Heart right ventricle (tissue), 16 donors: ENCODE measurements at regions of chrX and their contacts with region 1.

Region 1: GRCh38 chrX:8724300-8724699 is 7.6 kb downstream of the ANOS1 start:
- DNase-seq: no peak
- ATAC-seq: peak in 1 of 8 donors; percentile 48
- H3K4me3 ChIP-seq: no peak overlapping the region
- H3K27ac ChIP-seq: no peak overlapping the region
- H3K4me1 ChIP-seq: no peaks in the 10 kb centered on the region
- H3K27me3 ChIP-seq: peaks cover 0 to 28% (median 0%) of the 10 kb centered on the region in 7 donors
- CTCF ChIP-seq: no peak

Region 2: DNA sequence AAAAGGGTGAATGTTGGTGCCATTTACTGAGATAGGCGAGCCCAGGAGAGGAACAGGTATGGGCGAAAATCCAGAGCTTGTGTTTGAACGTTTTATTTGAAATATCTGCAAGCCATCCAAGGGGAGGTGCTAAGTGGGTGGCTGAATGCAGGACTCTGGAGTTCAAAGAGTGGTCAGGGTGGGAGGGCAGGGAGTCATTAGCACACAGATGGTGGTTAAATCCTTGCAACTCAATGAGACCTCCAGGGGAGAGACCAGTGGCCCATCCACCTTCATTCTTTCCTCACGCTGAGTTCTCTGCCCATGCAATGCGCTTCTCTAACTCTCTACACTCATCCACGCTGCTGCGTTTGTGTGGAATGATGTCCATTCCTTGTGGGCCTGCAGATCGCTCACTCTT is 158.6 kb before region 1 on chrX:
- intact Hi-C with region 1: loop called in 1 of 10 experiments (anchors 10 kb)
- DNase-seq: no peak
- ATAC-seq: no peak
- H3K4me3 ChIP-seq: no peak overlapping the region
- H3K27ac ChIP-seq: no peak overlapping the region
- H3K4me1 ChIP-seq: no peaks in the 10 kb centered on the region
- H3K27me3 ChIP-seq: no peaks in the 10 kb centered on the region
- CTCF ChIP-seq: no peak

Region 3: DNA sequence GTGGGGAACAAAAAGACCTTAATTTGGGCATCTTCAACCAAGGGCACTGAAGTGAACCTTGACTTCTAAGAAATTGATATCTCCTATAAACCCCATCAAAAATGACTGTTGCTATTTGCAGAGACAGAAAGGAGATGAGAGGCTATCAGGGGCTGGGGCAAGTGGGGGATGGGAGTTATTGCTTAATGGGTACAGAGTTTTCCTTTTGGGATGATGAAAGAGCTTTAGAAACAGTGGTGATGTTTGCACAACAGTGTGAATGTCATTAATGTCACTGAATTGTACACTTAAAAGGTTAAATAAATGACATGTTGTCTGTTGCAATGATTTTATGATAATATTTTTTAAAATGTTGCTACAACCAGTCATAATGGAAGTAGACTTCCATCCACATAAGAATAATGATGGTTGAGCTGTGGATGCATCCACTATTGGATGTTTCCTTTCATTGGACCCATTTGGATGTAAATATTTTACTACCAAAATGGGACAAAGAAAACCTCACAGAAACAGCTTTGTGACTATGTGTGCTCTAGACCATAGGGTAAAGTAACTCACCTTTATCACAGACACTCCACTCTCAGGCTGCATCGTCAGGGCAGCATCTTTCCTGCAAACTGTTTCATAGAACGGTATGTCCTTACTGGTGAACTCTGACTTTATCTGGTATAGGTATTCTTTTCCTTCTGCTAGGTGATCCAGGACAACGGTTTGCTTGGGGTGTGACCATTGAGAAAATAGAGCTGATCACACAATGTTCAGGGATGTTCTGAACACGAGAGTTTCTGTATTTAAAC is 108.5 kb after region 1 on chrX:
- intact Hi-C with region 1: no loop called
- DNase-seq: no peak
- ATAC-seq: no peak
- H3K4me3 ChIP-seq: no peak overlapping the region
- H3K27ac ChIP-seq: no peak overlapping the region
- H3K4me1 ChIP-seq: no peaks in the 10 kb centered on the region
- H3K27me3 ChIP-seq: peaks cover 0 to 67% (median 0%) of the 10 kb centered on the region in 7 donors
- CTCF ChIP-seq: no peak